K562 (cell line): ENCODE measurements at regions of chr5 and their contacts with region 1.

Region 1: GRCh38 chr5:153496835-153497234 is 6.4 kb downstream of the GRIA1 start:
- DNase-seq: peak; percentile 7 to 20 (median 16)
- ATAC-seq: peak; percentile 37; the same call in 1 of the 3 replicates
- H3K4me3 ChIP-seq: no peak overlapping the region
- H3K27ac ChIP-seq: no peak overlapping the region
- H3K4me1 ChIP-seq: no peaks in the 10 kb centered on the region
- H3K27me3 ChIP-seq: no peaks in the 10 kb centered on the region
- CTCF ChIP-seq: peak; percentile 30 to 60 (median 41); a peak in 4 of 6 replicates
- EP300 ChIP-seq: no peak
- POLR2A ChIP-seq: no peak
- RAD21 ChIP-seq: peak; percentile 70 to 82

Region 2: DNA sequence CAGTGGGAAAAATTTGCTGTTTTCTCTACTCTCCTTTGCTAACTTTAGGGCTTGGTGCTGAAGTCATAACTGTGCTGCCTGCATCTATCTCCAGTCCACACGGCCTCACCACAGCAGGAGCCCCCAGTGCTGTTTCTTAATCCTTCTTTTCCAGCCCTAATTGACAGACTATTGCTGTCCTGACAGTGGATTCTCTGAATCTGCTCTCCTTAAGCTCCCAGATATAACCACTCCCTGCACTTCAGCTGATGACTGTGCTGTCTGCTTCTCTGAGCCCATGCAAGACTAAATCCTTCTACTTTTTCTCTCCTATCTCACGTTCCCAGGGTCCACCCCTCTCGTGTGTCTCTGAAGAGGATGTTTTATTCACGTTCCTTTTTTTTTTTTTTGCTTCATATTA is 26.1 kb before region 1 on chr5:
- CTCF ChIA-PET with region 1: no interaction called
- POLR2A ChIA-PET with region 1: no interaction called
- in situ Hi-C with region 1: no loop called
- intact Hi-C with region 1: no loop called
- DNase-seq: no peak
- ATAC-seq: no peak
- H3K4me3 ChIP-seq: no peak overlapping the region
- H3K27ac ChIP-seq: no peak overlapping the region
- H3K4me1 ChIP-seq: no peaks in the 10 kb centered on the region
- H3K27me3 ChIP-seq: no peaks in the 10 kb centered on the region
- CTCF ChIP-seq: no peak
- EP300 ChIP-seq: no peak
- POLR2A ChIP-seq: no peak
- RAD21 ChIP-seq: no peak

Region 3: DNA sequence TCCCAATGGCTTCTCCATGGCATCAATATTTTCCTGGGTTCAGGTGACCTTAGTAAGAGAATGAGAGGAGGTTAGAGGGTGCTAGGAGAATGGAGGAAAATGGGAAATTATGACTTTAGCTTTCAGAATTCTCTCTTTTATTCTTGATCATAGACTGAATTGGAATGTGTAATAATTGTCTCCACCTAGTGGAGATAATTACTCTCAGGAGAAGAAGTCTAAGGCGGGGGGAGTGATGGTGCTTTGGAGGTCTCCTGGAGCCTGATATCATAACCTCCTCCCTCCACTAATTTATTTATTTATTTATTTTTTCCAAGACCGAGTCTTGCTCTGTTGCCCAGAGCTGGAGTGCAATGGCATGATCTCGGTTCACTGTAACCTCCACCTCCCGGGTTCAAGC is 214.9 kb after region 1 on chr5:
- CTCF ChIA-PET with region 1: interaction called, 3 read pairs
- POLR2A ChIA-PET with region 1: no interaction called
- in situ Hi-C with region 1: no loop called
- intact Hi-C with region 1: loop called (anchors 10 kb)
- DNase-seq: no peak
- ATAC-seq: 0 out of 3 replicates have a peak, but pooled peaks have one; percentile 42
- H3K4me3 ChIP-seq: no peak overlapping the region
- H3K27ac ChIP-seq: no peak overlapping the region
- H3K4me1 ChIP-seq: no peaks in the 10 kb centered on the region
- H3K27me3 ChIP-seq: no peaks in the 10 kb centered on the region
- CTCF ChIP-seq: peak in 1 of 3 experiments; percentile 25; a peak in 2 of 6 replicates
- EP300 ChIP-seq: no peak
- POLR2A ChIP-seq: no peak
- RAD21 ChIP-seq: peak in 1 of 2 experiments; percentile 43; a peak in 2 of 4 replicates

Region 4: DNA sequence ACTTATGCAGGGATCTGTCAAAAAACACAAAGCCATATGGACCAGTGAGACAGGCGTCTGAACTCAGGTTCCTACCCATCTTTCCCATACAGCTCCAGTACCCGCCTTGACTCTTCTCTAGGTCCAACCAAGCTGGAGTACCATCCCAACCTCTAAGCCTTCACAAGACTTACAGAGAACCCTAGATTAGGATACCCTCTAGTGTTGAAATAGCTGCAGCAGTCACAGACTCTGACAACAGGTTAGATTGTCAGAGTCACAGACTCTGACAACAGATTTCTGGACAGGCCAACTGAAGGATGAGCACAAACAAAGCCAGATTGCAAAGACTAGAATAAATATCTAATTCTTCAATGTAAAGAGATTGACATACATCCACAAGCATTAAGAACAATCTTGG is 259.7 kb after region 1 on chr5:
- CTCF ChIA-PET with region 1: no interaction called
- POLR2A ChIA-PET with region 1: no interaction called
- in situ Hi-C with region 1: no loop called
- intact Hi-C with region 1: loop called (anchors 1 kb)
- DNase-seq: peak in 1 of 4 experiments; percentile 13
- ATAC-seq: peak; percentile 82
- H3K4me3 ChIP-seq: no peak overlapping the region
- H3K27ac ChIP-seq: no peak overlapping the region
- H3K4me1 ChIP-seq: no peaks in the 10 kb centered on the region
- H3K27me3 ChIP-seq: no peaks in the 10 kb centered on the region
- CTCF ChIP-seq: peak in 2 of 3 experiments; percentile 29 to 35; a peak in 2 of 6 replicates
- EP300 ChIP-seq: no peak
- POLR2A ChIP-seq: no peak
- RAD21 ChIP-seq: peak in 1 of 2 experiments; percentile 49; a peak in 2 of 4 replicates

Region 5: DNA sequence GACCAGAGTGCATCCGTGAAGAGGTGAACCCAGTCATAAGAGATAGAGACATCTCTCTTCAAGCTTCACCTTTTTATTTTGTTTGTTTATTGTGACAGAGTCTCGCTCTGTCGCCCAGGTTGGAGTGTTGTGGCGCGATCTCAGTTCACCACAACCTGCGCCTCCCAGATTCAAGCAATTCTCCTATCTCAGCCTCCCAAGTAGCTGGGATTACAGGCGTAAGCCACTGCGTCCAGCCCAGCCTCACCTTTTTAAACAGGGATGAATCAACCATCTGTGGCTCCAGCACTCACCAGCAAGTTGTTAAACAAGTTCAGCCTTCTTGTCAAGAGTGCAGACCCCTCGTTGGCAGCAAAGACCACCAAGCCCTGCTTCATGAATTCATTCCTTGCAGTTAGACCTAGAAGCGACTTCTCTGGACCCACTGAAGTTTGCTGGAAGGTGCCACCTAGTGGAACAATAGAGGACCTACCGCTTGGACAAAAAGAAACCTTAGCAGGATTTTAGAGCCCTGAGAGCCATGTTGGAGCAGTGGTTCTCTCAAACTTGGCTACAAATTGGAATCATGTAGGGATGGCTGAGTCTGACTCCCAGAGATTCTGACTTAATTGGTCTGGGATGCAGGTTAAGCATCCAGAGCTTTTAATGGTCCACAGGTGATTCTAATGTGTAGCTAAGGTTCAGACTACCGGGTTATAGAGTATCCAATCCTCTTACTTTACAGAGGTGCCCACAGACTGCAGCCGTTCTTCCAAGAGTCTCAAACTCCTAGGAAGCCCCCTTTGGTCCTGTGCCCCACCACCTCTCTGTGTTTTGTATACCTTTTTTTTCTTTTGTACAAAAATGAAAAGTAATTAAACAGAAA is 683.2 kb after region 1 on chr5:
- CTCF ChIA-PET with region 1: no interaction called
- POLR2A ChIA-PET with region 1: no interaction called
- in situ Hi-C with region 1: no loop called
- intact Hi-C with region 1: no loop called
- DNase-seq: peak; percentile 62 to 67 (median 65)
- ATAC-seq: peak; percentile 98
- H3K4me3 ChIP-seq: no peak overlapping the region
- H3K27ac ChIP-seq: no peak overlapping the region
- H3K4me1 ChIP-seq: no peaks in the 10 kb centered on the region
- H3K27me3 ChIP-seq: peaks cover 5 to 21% of the 10 kb centered on the region in 2 experiments
- CTCF ChIP-seq: peak; percentile 79 to 82 (median 80)
- EP300 ChIP-seq: no peak
- POLR2A ChIP-seq: no peak
- RAD21 ChIP-seq: peak; percentile 76 to 79